ENCODE measurements at regions of chr11 and their contacts with region 1.

Region 1: DNA sequence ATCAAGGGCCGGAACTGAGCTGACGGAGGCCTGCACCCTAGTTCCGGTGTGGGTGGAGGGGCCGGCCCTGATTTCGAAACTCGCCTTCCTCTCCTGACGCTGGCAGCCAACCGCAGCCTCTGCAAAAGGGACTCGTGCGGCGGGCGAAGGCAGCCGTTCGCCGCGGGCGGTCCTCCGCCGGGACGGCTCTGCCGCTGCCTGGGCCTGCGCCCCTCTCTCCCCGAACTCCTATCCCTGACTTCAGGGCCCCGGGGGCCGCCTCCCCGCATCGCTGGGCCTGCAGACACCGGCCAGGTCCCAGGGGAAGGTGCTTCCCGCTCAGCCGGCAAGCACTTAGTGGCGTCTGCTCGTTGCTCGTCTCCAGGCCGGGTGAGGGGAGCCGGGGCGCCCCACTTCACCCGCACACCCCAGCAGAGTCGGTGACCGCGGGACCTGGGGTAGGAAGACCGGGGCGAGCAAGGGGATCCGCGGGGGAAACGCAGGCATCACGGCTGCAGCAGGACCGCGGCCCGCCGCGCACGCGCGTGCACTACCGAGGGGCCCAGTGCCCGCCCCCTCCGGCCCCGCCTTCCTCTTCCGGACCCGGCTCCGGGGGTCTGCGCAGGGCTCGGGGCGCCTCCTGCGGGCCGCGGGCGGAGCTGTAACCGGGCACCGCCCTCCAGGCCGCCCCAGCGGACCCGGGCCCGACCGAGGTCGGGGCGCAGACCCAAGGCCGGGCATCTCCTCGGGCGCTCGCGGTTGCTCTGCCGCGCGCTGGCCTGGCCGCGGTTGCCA is 464 bp upstream of the ANKRD13D start:
- DNase-seq: peak; percentile 86 to 94 (median 91)
- H3K4me3 ChIP-seq: peak overlapping the region; percentile 92
- H3K4me3 Mint-ChIP-seq: peak overlapping the region; percentile 74 to 91 (median 76)
- H3K27ac ChIP-seq: peak overlapping the region; percentile 88
- H3K27ac Mint-ChIP-seq: peak overlapping the region; percentile 86 to 100 (median 99)
- H3K4me1 ChIP-seq: peaks cover 71% of the 10 kb centered on the region
- H3K4me1 Mint-ChIP-seq: peaks cover 50 to 75% (median 51%) of the 10 kb centered on the region in 3 donors
- H3K27me3 ChIP-seq: no peaks in the 10 kb centered on the region
- H3K27me3 Mint-ChIP-seq: peaks cover 0 to 2% of the 10 kb centered on the region in 2 donors

Region 2: GRCh38 chr11:66834501-66834845 is 454.2 kb before region 1 on chr11:
- CTCF ChIA-PET with region 1: no interaction called
- POLR2A ChIA-PET with region 1: no interaction called
- DNase-seq: no peak
- H3K4me3 ChIP-seq: no peak overlapping the region
- H3K4me3 Mint-ChIP-seq: peak overlapping the region in 1 of 7 donors; percentile 49
- H3K27ac ChIP-seq: no peak overlapping the region
- H3K27ac Mint-ChIP-seq: peak overlapping the region in 6 of 8 donors; percentile 17 to 86 (median 70)
- H3K4me1 ChIP-seq: peaks cover 4% of the 10 kb centered on the region
- H3K4me1 Mint-ChIP-seq: peaks cover 8 to 23% (median 22%) of the 10 kb centered on the region in 3 donors
- H3K27me3 ChIP-seq: no peaks in the 10 kb centered on the region
- H3K27me3 Mint-ChIP-seq: no peaks in the 10 kb centered on the region

Region 3: DNA sequence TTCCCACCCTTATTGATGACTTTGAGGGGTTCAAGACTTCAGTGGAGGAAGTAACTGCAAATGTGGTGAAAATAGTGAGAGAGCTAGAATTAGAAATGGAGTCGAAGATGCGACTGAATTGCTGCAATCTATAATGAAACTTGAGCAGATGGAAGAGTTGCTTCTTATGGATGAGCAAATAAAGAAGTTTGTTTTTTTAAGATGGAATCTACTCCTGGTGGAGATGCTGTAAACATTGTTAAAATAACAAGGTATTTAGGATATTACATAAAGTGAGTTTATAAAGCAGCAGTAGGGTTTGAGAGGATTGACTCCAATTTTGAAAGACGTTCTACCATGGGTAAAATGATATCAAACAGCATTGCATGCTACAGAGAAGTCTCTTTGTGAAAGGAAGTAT is 86.6 kb before region 1 on chr11:
- CTCF ChIA-PET with region 1: no interaction called
- POLR2A ChIA-PET with region 1: no interaction called
- DNase-seq: no peak
- H3K4me3 ChIP-seq: no peak overlapping the region
- H3K4me3 Mint-ChIP-seq: no peak overlapping the region
- H3K27ac ChIP-seq: no peak overlapping the region
- H3K27ac Mint-ChIP-seq: peak overlapping the region in 1 of 8 donors; percentile 25
- H3K4me1 ChIP-seq: no peaks in the 10 kb centered on the region
- H3K4me1 Mint-ChIP-seq: peaks cover 0 to 6% (median 1%) of the 10 kb centered on the region in 3 donors
- H3K27me3 ChIP-seq: no peaks in the 10 kb centered on the region
- H3K27me3 Mint-ChIP-seq: no peaks in the 10 kb centered on the region

Region 4: GRCh38 chr11:67277231-67277961 is 11.2 kb before region 1 on chr11:
- CTCF ChIA-PET with region 1: interaction called, 114 read pairs
- POLR2A ChIA-PET with region 1: interaction called, 283 read pairs
- DNase-seq: peak; percentile 87 to 95 (median 94)
- H3K4me3 ChIP-seq: peak overlapping the region; percentile 62
- H3K4me3 Mint-ChIP-seq: peak overlapping the region; percentile 75 to 89 (median 81)
- H3K27ac ChIP-seq: peak overlapping the region; percentile 89
- H3K27ac Mint-ChIP-seq: peak overlapping the region; percentile 86 to 99 (median 98)
- H3K4me1 ChIP-seq: peaks cover 88% of the 10 kb centered on the region
- H3K4me1 Mint-ChIP-seq: peaks cover 61 to 79% (median 68%) of the 10 kb centered on the region in 3 donors
- H3K27me3 ChIP-seq: no peaks in the 10 kb centered on the region
- H3K27me3 Mint-ChIP-seq: no peaks in the 10 kb centered on the region

Region 5: DNA sequence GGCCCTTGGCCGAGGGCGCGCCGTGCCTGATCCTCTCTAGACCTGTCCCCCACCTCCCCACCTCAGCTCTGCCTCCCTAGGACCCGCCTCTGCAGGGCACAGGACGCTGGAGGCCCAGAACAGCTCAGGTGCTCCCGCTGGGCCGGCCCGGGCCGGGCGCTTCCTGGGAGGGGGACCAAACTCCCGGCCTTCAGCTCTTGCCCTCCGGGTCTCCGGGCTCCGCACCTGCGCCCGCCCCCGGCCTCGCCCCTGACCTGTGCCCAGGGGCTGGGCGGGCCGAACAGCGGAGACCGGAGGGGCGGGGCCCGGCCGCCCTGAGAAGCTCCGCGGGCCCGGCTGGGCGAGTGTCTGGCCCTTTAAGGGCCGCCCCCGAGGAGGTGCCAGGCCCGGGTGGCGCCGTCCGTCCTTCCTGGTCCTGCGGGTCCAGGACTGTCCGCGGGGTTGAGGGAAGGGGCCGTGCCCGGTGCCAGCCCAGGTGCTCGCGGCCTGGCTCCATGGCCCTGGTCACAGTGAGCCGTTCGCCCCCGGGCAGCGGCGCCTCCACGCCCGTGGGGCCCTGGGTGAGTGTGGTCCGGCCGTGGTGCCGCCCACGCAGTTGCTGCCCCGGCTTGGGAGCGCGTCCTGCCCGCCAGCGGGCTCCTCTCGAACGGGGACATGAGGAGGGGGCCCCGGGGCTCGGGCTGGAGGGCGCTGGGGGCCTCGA is 14.6 kb after region 1 on chr11 and contains the start of gene SSH3:
- CTCF ChIA-PET with region 1: interaction called, 6 read pairs
- POLR2A ChIA-PET with region 1: interaction called, 22 read pairs
- DNase-seq: peak in 4 of 5 donors; percentile 24 to 67 (median 43)
- H3K4me3 ChIP-seq: peak within 1 kb of the TSS; percentile 45
- H3K4me3 Mint-ChIP-seq: peak within 1 kb of the TSS; percentile 61 to 86 (median 68)
- H3K27ac ChIP-seq: no peak within 1 kb of the TSS
- H3K27ac Mint-ChIP-seq: peak within 1 kb of the TSS in 7 of 8 donors; percentile 42 to 86 (median 74)
- H3K4me1 ChIP-seq: peaks cover 14% of the 10 kb centered on the region
- H3K4me1 Mint-ChIP-seq: peaks cover 10 to 30% (median 11%) of the 10 kb centered on the region in 3 donors
- H3K27me3 ChIP-seq: no peaks in the 10 kb centered on the region
- H3K27me3 Mint-ChIP-seq: no peaks in the 10 kb centered on the region
- total RNA-seq, gene SSH3: 8.4 to 10.6 TPM

Measured in CD8-positive, alpha-beta memory T cell (primary cell).